ENCODE measurements at regions of chr11 and their contacts with region 1.

Region 1: DNA sequence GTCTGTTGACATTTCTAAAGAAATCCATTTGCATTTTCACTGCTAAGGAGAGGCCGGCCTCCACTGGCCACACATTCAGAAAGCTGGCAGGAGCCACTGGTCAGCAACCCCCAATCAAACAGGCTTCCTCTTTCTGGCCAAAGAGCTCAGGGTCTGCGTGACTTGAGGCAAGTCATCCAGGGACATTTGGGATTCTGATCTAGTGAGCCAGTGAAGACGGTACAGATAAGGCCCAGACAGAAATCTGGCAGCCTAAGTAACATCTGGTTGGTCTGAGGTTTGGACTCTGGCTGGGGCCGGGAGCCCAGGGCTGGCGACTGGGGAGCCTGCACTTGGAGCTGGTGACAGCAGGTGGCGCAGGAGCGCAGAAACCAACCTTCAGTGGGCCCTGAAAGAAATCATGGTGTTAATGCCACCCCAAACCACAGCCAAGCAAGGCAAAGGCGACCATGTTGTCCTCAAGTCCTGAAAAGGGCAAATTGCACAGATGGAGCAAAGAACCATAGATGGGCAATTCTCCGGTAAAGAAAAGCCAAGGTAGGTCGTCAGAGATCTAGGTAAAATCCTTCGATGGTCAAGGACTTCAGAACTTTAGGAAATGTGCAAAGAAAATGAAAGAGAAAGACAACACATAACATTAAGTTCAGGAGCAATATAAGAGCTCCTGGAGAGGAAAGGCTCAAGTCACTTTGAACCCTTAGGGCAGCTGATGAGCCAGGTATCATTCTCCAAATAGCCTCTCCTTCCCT is 99.4 kb upstream of the BLID start:
- DNase-seq: peak; percentile 99
- ATAC-seq: peak; percentile 88
- H3K4me3 ChIP-seq: no peak overlapping the region
- H3K27ac ChIP-seq: peak overlapping the region; percentile 76
- H3K4me1 ChIP-seq: peaks cover 23% of the 10 kb centered on the region
- H3K27me3 ChIP-seq: no peaks in the 10 kb centered on the region
- CTCF ChIP-seq: peak; percentile 97
- POLR2A ChIP-seq: peak; percentile 49; the same call in 1 of the 2 replicates
- RAD21 ChIP-seq: peak; percentile 88

Region 2: DNA sequence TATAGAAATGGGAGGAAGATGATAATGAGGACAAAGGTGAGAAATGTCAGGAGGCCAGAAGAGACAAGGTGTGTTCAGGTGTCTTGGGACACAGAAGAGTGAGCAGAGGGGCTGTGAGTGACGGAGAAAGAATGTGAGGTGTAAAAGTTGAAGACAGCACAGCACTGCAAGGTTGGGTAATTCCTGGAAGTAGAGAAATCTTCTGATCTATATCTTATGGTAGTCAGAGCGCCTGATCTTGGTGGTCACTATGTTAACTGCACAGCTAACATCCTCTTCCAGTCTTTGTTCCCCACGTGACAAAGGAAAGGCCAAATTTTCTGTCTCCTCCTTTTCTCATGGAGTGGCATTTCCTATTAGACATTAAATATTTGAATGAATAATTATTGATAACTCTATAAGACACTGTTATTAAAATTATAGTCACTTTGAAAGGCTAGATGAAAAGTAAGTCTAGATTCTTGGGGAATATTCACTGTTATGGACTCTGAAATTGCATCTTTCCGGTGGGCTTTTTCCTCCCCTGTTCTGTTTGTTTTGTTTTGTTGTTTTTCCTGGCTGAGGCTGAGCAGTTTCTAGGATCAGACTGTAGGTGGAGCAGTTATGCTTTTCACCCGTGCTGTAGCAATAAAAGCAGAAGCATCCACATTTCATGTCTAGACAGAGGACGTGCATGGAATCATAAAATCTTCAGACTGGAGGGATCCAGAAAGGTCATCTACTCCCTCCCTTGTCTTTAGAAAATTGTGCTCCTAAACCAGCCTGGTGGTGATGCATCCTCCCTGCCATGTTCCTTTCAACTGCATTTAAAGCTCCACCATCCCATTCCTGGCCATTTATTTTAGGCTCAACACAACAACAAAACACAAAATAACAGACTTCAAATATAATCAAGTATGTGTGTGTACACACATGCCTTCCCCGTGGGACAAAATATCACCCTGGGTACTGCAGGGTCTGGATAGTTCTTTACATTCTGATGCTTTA is 896.3 kb before region 1 on chr11:
- CTCF ChIA-PET with region 1: no interaction called
- POLR2A ChIA-PET with region 1: no interaction called
- dilution Hi-C with region 1: no loop called
- in situ Hi-C with region 1: loop called (anchors 25 kb)
- intact Hi-C with region 1: no loop called
- DNase-seq: peak; percentile 56
- ATAC-seq: peak; percentile 89
- H3K4me3 ChIP-seq: no peak overlapping the region
- H3K27ac ChIP-seq: no peak overlapping the region
- H3K4me1 ChIP-seq: no peaks in the 10 kb centered on the region
- H3K27me3 ChIP-seq: peaks cover 12% of the 10 kb centered on the region
- CTCF ChIP-seq: peak; percentile 73
- POLR2A ChIP-seq: no peak
- RAD21 ChIP-seq: peak; percentile 65

Region 3: GRCh38 chr11:122293296-122294023 is 78.0 kb after region 1 on chr11:
- CTCF ChIA-PET with region 1: no interaction called
- POLR2A ChIA-PET with region 1: no interaction called
- dilution Hi-C with region 1: no loop called
- in situ Hi-C with region 1: no loop called
- intact Hi-C with region 1: loop called (anchors 2 kb)
- DNase-seq: peak; percentile 37
- ATAC-seq: peak; percentile 24; the same call in 1 of the 2 replicates
- H3K4me3 ChIP-seq: no peak overlapping the region
- H3K27ac ChIP-seq: no peak overlapping the region
- H3K4me1 ChIP-seq: no peaks in the 10 kb centered on the region
- H3K27me3 ChIP-seq: no peaks in the 10 kb centered on the region
- CTCF ChIP-seq: peak; percentile 46
- POLR2A ChIP-seq: no peak
- RAD21 ChIP-seq: peak; percentile 42

Region 4: DNA sequence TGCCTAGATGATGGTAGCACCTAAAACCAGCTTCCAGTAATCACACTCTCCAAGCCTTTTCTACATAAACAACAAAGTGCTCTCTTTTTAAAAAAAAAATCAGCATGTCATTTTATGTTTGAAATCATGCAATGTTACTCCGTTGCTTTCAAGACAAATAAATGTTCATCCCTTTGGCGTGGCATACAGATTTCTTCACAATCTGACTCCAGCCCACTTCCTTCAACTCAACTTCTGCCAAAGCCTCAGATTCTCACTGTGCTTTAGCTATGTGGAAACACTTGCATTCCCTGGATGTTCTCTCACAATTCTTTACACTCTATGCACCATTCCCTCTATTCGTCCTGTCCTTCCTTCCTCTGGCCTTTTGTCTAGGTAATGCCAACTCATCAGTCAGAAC is 106.9 kb after region 1 on chr11:
- CTCF ChIA-PET with region 1: no interaction called
- POLR2A ChIA-PET with region 1: no interaction called
- dilution Hi-C with region 1: no loop called
- in situ Hi-C with region 1: no loop called
- intact Hi-C with region 1: loop called (anchors 5 kb)
- DNase-seq: peak; percentile 74
- ATAC-seq: peak; percentile 72
- H3K4me3 ChIP-seq: peak overlapping the region; percentile 38
- H3K27ac ChIP-seq: peak overlapping the region; percentile 86; the same call in 1 of the 2 replicates
- H3K4me1 ChIP-seq: peaks cover 23% of the 10 kb centered on the region
- H3K27me3 ChIP-seq: no peaks in the 10 kb centered on the region
- CTCF ChIP-seq: no peak
- POLR2A ChIP-seq: no peak
- RAD21 ChIP-seq: no peak

Region 5: GRCh38 chr11:122367809-122368231 is 152.4 kb after region 1 on chr11:
- CTCF ChIA-PET with region 1: no interaction called
- POLR2A ChIA-PET with region 1: no interaction called
- dilution Hi-C with region 1: no loop called
- in situ Hi-C with region 1: no loop called
- intact Hi-C with region 1: loop called (anchors 2 kb)
- DNase-seq: peak; percentile 82
- ATAC-seq: peak; percentile 92
- H3K4me3 ChIP-seq: no peak overlapping the region
- H3K27ac ChIP-seq: peak overlapping the region; percentile 34
- H3K4me1 ChIP-seq: no peaks in the 10 kb centered on the region
- H3K27me3 ChIP-seq: no peaks in the 10 kb centered on the region; the same call in 1 of the 2 replicates
- CTCF ChIP-seq: no peak
- POLR2A ChIP-seq: no peak
- RAD21 ChIP-seq: no peak

Region 6: GRCh38 chr11:122439911-122440810 is 224.7 kb after region 1 on chr11:
- CTCF ChIA-PET with region 1: no interaction called
- POLR2A ChIA-PET with region 1: no interaction called
- dilution Hi-C with region 1: no loop called
- in situ Hi-C with region 1: no loop called
- intact Hi-C with region 1: loop called (anchors 2 kb)
- DNase-seq: peak; percentile 45
- ATAC-seq: peak; percentile 81
- H3K4me3 ChIP-seq: peak overlapping the region; percentile 44
- H3K27ac ChIP-seq: peak overlapping the region; percentile 83; the same call in 1 of the 2 replicates
- H3K4me1 ChIP-seq: peaks cover 5% of the 10 kb centered on the region; the same call in 1 of the 2 replicates
- H3K27me3 ChIP-seq: peaks cover 12% of the 10 kb centered on the region; the same call in 1 of the 2 replicates
- CTCF ChIP-seq: no peak
- POLR2A ChIP-seq: no peak
- RAD21 ChIP-seq: no peak

Region 7: DNA sequence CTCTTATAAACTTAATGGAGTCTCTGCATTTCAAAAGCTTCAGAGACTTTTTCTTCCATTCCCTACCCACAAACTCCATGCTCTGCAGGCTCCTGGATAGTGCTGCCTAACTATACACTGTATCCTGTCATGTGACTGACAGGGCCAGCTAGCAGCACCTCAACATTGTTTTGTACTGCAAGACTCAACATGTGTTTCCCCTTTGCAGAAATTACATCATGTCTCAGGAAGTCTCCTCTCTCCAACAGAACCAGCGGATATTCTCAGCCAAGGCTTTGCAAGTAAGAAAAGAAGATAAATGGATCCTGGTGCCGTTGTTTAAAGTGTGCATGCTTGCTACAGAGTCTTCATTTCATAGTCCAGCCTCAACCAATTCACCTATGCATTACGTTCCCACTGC is 276.1 kb after region 1 on chr11:
- CTCF ChIA-PET with region 1: no interaction called
- POLR2A ChIA-PET with region 1: no interaction called
- dilution Hi-C with region 1: no loop called
- in situ Hi-C with region 1: no loop called
- intact Hi-C with region 1: loop called (anchors 2 kb)
- DNase-seq: peak; percentile 75
- ATAC-seq: peak; percentile 60; the same call in 1 of the 2 replicates
- H3K4me3 ChIP-seq: no peak overlapping the region
- H3K27ac ChIP-seq: peak overlapping the region; percentile 32; the same call in 1 of the 2 replicates
- H3K4me1 ChIP-seq: peaks cover 4% of the 10 kb centered on the region; the same call in 1 of the 2 replicates
- H3K27me3 ChIP-seq: peaks cover 4% of the 10 kb centered on the region; the same call in 1 of the 2 replicates
- CTCF ChIP-seq: no peak
- POLR2A ChIP-seq: no peak
- RAD21 ChIP-seq: no peak